Activated T-helper 1 cell treated with anti-CD3 and anti-CD28 coated beads, Interleukin-12 subunit alpha, Interleukin-12 subunit beta, Interleukin-2, Interleukin-4 antibody, amounts not matched to agents 30 ng/mL and 10 ng/mL and 1 ng/mL, durations not matched to agents 14 hours and 24 hours and 36 hours (primary cell): ENCODE measurements at regions of chr21 and their contacts with region 1.

Region 1: DNA sequence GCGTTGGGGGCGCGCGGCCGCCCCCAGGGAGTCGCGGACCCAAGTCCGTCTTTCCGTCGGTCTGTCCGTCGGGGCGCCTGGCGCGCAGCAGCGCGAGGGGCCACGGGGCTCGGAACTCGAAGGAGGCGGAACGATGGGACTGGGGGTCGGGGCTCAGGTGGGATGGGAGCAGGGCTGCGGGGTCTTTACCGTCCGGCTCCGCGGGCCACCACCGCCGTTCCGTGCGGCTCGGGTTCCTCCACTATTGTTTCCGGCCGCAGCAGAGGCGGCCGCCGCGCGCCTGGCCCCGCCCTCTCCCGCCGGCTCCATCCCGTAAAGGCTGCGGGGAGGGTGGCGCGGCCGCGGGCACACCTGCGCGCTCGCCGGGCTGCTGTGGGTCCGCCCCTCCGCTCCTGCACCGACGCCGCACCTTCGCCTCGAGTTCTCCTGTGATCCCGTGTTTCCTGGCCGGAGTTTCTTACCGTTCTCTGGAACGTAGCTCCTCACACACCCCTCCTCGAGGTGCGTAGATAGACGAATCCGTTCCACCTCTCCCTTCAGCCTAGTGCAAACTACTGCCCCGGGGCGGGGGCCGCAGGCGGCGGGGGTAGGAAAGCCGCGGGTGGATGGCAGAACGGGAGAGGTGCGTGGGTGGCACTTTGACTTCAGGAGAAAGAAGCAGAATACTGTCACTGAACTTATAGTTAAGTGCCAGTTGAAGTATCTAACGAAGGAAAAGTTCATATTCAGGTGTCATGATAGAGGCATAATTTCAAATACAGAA is at the start of gene C21orf91:
- DNase-seq: peak; percentile 87
- H3K4me3 Mint-ChIP-seq: peak within 1 kb of the TSS; percentile 88
- H3K27ac Mint-ChIP-seq: peak within 1 kb of the TSS; percentile 100
- H3K4me1 Mint-ChIP-seq: peaks cover 43% of the 10 kb centered on the region
- H3K27me3 Mint-ChIP-seq: no peaks in the 10 kb centered on the region
- total RNA-seq, gene C21orf91: 45.4 and 49.2 TPM in 2 replicates

Region 2: DNA sequence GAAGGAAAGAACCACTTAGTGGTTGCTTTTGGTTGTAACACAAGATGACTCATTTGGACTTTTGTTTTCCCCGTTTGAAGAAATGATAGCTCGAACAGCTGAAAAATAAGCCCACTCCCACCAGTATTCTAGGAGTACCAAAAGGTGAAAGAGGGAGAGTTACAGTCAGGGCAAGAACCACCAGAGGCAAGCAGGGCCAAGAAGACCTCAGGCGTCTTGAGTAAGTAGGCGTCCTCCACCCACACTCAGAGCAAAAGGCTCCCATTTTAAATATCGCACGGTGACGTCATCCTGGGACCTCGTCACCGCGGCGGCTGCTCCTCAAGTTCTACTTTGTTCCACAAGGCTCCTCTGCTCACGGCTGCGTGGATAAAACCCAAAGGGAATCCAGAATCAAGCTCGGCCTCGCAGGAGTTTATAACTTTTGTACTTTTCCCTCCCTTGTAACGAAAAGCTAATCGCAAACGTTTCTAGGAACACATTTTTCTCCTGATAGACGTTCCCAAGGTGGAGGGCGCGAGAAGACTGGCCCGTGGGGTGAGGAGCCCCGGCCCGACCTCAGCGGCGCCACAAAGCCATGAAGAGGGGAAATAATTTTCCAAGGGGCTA is 207.8 kb before region 1 on chr21:
- intact Hi-C with region 1: loop called (anchors 1 kb)
- DNase-seq: peak; percentile 76
- H3K4me3 Mint-ChIP-seq: peak overlapping the region; percentile 88
- H3K27ac Mint-ChIP-seq: peak overlapping the region; percentile 97
- H3K4me1 Mint-ChIP-seq: peaks cover 58% of the 10 kb centered on the region
- H3K27me3 Mint-ChIP-seq: no peaks in the 10 kb centered on the region

Region 3: GRCh38 chr21:17644186-17644585 is 175.1 kb before region 1 on chr21:
- intact Hi-C with region 1: no loop called
- DNase-seq: no peak
- H3K4me3 Mint-ChIP-seq: no peak overlapping the region
- H3K27ac Mint-ChIP-seq: no peak overlapping the region
- H3K4me1 Mint-ChIP-seq: no peaks in the 10 kb centered on the region
- H3K27me3 Mint-ChIP-seq: peaks cover 2% of the 10 kb centered on the region

Region 4: GRCh38 chr21:17708522-17709265 is 110.6 kb before region 1 on chr21:
- intact Hi-C with region 1: loop called (anchors 1 kb)
- DNase-seq: no peak
- H3K4me3 Mint-ChIP-seq: no peak overlapping the region
- H3K27ac Mint-ChIP-seq: peak overlapping the region; percentile 42
- H3K4me1 Mint-ChIP-seq: peaks cover 31% of the 10 kb centered on the region
- H3K27me3 Mint-ChIP-seq: peaks cover 10% of the 10 kb centered on the region

Region 5: DNA sequence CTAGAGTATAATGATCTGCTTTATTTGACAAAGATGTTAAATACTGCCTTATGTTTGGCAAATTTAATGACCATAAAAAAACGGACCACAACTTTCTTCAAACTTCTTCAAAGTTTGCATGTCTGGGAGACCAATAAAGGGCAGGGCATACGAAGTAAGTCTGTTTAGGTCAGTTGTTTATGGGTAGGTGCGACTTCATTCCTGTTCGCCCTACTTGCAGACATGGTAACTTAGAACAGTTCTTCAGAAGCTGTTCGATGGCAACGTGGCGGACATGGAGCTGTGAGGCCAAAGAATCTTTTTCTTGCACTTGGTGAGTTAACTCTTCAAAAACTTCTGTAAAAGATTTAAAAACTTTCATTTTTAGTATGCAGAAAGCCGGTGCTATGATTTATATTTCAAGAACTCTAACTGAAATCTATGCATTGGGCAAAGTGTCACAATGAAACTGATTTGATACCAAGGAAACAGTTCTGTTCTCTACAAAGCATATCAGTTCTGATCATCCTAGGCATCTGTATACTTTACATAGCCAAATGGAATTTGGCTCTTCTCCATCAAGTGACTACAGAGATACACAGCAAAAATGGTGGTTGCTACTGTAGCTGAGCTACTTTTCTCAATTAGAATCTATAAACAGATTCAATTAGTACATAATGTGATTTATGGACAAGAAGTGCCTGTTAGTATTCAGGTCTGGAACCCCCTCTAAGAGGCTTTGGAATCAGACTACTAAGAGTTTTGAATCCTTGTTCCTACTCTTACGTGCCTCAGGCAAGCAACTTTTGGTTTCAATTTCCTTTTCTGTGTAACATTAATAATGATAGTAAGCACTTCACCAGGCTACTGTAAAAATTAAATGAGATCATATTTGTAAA is 25.8 kb before region 1 on chr21:
- intact Hi-C with region 1: loop called (anchors 1 kb)
- DNase-seq: no peak
- H3K4me3 Mint-ChIP-seq: peak overlapping the region; percentile 78
- H3K27ac Mint-ChIP-seq: peak overlapping the region; percentile 80
- H3K4me1 Mint-ChIP-seq: peaks cover 78% of the 10 kb centered on the region
- H3K27me3 Mint-ChIP-seq: no peaks in the 10 kb centered on the region

Region 6: DNA sequence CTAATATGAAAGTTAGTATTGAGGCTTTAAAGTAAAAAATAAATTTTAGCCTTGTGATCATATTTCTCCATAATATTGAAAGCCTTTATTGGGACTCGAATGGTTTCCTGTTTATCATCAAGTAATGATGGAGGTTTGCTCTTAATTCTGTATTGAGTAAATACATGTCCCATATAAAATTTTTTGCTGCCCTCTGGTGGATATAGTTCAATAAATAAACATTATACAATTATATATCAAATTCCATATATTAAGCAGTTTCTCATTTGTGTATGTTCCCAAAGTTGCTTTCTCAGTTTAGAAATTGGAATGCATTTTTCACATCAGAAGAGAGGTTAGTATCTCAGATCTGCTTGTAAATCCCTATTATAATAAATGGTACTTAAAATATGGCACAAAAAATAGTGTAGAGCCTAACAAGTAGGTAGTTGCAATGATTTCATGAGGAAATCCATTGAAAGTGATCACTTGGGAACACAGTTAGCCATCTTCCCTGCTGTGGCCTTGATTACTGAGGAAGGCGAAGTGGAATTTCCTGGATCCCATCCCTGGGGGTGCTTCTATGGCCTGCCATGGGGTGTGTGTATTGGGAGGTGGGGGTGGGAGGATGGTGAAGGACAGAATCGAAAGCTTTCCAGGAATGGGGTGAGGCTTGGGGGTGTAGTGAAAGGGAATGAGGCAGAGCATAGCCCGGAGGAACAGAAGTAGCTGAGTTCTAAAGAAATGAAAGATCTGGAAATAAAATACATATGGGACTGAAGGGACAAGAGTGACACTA is 83.9 kb after region 1 on chr21:
- intact Hi-C with region 1: loop called (anchors 2 kb)
- DNase-seq: no peak
- H3K4me3 Mint-ChIP-seq: no peak overlapping the region
- H3K27ac Mint-ChIP-seq: no peak overlapping the region
- H3K4me1 Mint-ChIP-seq: peaks cover 8% of the 10 kb centered on the region
- H3K27me3 Mint-ChIP-seq: peaks cover 1% of the 10 kb centered on the region

Region 7: GRCh38 chr21:18350216-18350615 is 530.9 kb after region 1 on chr21:
- intact Hi-C with region 1: no loop called
- DNase-seq: no peak
- H3K4me3 Mint-ChIP-seq: no peak overlapping the region
- H3K27ac Mint-ChIP-seq: no peak overlapping the region
- H3K4me1 Mint-ChIP-seq: no peaks in the 10 kb centered on the region
- H3K27me3 Mint-ChIP-seq: no peaks in the 10 kb centered on the region